ENCODE measurements at regions of chr1 and their contacts with region 1.

Region 1: GRCh38 chr1:16026723-16027484 is 5.1 kb downstream of the CLCNKA start:
- DNase-seq: peak; percentile 73
- H3K4me3 ChIP-seq: 0 out of 4 replicates have a peak overlapping the region, but pooled peaks of 1 of the 2 experiments have one; percentile 5
- H3K27ac ChIP-seq: no peak overlapping the region
- H3K4me1 ChIP-seq: peaks cover 0 to 7% of the 10 kb centered on the region in 2 experiments; a peak in 1 of 4 replicates
- H3K27me3 ChIP-seq: no peaks in the 10 kb centered on the region
- CTCF ChIP-seq: no peak
- EP300 ChIP-seq: no peak
- RAD21 ChIP-seq: no peak

Region 2: GRCh38 chr1:16009030-16009709 is 17.7 kb before region 1 on chr1:
- CTCF ChIA-PET with region 1: interaction called, 44 read pairs
- POLR2A ChIA-PET with region 1: no interaction called
- DNase-seq: peak; percentile 91
- H3K4me3 ChIP-seq: no peak overlapping the region; a peak in 1 of 4 replicates
- H3K27ac ChIP-seq: no peak overlapping the region
- H3K4me1 ChIP-seq: peaks cover 0 to 6% of the 10 kb centered on the region in 2 experiments; a peak in 1 of 4 replicates
- H3K27me3 ChIP-seq: no peaks in the 10 kb centered on the region
- CTCF ChIP-seq: peak; percentile 97
- EP300 ChIP-seq: no peak
- RAD21 ChIP-seq: peak; percentile 98